ENCODE measurements at regions of chr12 and their contacts with region 1.

Region 1: DNA sequence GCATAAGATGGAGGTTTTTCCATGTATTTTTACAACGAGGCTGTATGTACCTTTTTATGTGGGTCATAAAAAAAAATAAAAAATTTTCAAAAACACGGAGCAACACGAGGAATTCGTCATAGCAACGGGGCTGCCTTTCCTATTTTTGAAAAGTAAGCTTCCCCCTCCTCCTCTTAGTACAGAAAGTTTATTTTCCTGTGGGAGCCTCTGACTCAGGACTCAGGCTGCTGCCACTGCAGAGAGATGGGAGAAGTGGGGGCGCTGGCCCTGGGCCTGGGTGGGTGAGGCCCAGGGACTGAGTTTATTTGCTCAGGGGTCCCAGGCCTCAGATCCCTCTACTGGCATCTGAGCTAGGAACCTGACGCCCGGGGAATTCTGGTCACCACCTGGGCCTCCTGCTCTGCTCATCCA is 10.2 kb upstream of the CMKLR1 start:
- DNase-seq: no peak
- ATAC-seq: peak in 2 of 4 donors; percentile 30 to 41
- H3K4me3 ChIP-seq: no peak overlapping the region
- H3K27ac ChIP-seq: no peak overlapping the region
- H3K4me1 ChIP-seq: peaks cover 0 to 10% (median 0%) of the 10 kb centered on the region in 12 donors
- H3K27me3 ChIP-seq: no peaks in the 10 kb centered on the region
- CTCF ChIP-seq: no peak
- POLR2A ChIP-seq: no peak

Region 2: DNA sequence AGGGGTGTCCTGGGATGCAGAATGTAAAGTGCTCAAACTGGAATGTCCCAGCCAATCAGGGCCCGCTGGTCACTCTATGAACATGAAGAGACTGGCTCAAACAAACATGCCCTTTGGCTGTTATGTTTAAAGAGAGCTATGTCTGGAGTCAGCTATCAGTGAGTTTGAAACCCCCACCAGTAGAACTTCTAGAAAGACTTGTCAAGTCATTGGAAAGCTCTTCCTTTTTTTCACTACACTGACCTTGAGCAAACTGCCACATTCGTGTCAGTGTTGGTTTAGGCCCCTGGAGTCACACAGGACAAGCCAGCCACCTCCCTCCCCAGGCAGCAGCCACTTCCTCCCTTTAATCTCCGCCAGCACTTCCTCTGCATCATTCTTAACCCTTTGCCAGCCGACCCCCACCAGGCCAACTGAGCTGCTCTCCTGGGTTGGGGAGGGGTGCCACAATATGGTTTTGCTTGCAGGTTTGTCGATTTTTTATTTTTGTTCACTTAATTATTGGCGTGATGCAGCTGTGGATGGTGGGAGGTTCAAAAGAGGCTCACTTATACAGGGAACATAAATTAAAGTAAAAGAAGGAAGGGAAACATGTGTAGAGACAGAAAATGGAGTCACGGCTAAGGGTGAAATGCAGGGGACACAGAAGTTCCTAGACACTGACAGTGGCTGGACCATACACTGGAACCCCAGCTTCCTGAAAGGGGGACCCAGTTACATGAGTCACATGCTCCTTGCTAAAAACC is 35.5 kb before region 1 on chr12:
- intact Hi-C with region 1: loop called in 2 of 10 experiments (anchors 1 to 5 kb)
- DNase-seq: peak in 4 of 5 donors; percentile 39 to 64 (median 54)
- ATAC-seq: peak; percentile 51 to 76 (median 62)
- H3K4me3 ChIP-seq: no peak overlapping the region
- H3K27ac ChIP-seq: peak overlapping the region; percentile 38 to 95 (median 70)
- H3K4me1 ChIP-seq: peaks cover 5 to 97% (median 29%) of the 10 kb centered on the region in 12 donors
- H3K27me3 ChIP-seq: no peaks in the 10 kb centered on the region
- CTCF ChIP-seq: no peak
- POLR2A ChIP-seq: no peak

Region 3: DNA sequence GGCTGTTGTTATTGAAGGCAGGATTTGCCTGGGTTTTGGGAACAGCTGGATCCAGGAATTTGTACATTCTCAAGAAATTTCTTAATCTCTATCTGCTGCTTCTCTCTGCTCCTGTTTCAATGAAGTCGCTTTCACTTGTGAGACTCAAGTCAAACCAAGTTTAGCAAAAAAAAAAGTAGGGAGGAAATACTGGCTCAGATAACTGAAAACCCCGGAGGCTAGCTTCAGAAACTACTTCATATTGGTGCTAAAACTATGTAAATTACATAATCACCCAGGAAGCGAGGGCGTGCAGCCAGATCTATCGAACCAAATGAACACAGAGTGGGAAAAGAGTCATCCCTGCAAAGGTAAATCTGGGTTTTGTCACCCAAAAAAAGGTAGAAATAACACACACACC is 97.5 kb after region 1 on chr12:
- intact Hi-C with region 1: loop called in 1 of 10 experiments (anchors 10 kb)
- DNase-seq: peak in 1 of 5 donors; percentile 40
- ATAC-seq: peak in 2 of 4 donors; percentile 13 to 61
- H3K4me3 ChIP-seq: no peak overlapping the region
- H3K27ac ChIP-seq: peak overlapping the region in 3 of 12 donors; percentile 30 to 57 (median 42)
- H3K4me1 ChIP-seq: peaks cover 0 to 18% (median 0%) of the 10 kb centered on the region in 12 donors
- H3K27me3 ChIP-seq: peaks cover 0 to 21% (median 3%) of the 10 kb centered on the region in 9 donors
- CTCF ChIP-seq: no peak
- POLR2A ChIP-seq: no peak

Measured in heart left ventricle (tissue), 16 donors.